Activated CD8-positive, alpha-beta T cell treated with anti-CD3 and anti-CD28 coated beads for 36 hours (primary cell): ENCODE measurements at regions of chr1 and their contacts with region 1.

Region 1: GRCh38 chr1:89125913-89126580 is at the start of gene GBP2:
- DNase-seq: peak; percentile 30
- ATAC-seq: peak; percentile 73
- H3K4me3 Mint-ChIP-seq: peak within 1 kb of the TSS; percentile 87
- H3K27ac Mint-ChIP-seq: peak within 1 kb of the TSS; percentile 99
- H3K4me1 Mint-ChIP-seq: peaks cover 48% of the 10 kb centered on the region
- H3K27me3 Mint-ChIP-seq: no peaks in the 10 kb centered on the region
- CTCF ChIP-seq: no peak
- total RNA-seq, gene GBP2: 181 to 189 TPM

Region 2: DNA sequence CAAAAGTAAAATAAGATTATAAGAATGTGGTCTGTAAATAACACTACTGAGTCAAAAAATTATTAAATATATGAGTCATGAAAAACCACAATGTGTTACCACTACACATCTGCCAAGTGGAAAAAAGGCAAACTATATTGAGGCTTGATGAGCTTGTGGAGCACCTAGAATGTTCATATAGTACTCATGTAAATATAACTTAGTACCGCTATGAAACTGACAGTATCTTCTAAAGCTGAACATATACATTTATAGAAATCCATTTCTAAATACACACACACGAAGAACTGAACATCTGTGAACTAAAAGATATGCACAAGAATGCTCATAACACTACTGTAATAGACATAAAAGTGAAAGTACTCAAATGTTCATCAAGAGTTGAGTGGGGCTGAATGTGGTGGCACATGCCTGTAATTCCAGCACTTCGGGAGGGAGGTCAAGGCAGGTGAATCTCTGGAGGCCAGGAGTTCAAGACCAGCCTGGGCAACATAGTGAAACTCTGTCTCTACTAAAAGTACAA is 84.9 kb before region 1 on chr1:
- CTCF ChIA-PET with region 1: no interaction called
- POLR2A ChIA-PET with region 1: interaction called, 11 read pairs
- intact Hi-C with region 1: no loop called
- DNase-seq: peak; percentile 43
- ATAC-seq: peak; percentile 88
- H3K4me3 Mint-ChIP-seq: peak overlapping the region; percentile 51
- H3K27ac Mint-ChIP-seq: peak overlapping the region; percentile 88
- H3K4me1 Mint-ChIP-seq: peaks cover 43% of the 10 kb centered on the region
- H3K27me3 Mint-ChIP-seq: peaks cover 2% of the 10 kb centered on the region
- CTCF ChIP-seq: no peak

Region 3: DNA sequence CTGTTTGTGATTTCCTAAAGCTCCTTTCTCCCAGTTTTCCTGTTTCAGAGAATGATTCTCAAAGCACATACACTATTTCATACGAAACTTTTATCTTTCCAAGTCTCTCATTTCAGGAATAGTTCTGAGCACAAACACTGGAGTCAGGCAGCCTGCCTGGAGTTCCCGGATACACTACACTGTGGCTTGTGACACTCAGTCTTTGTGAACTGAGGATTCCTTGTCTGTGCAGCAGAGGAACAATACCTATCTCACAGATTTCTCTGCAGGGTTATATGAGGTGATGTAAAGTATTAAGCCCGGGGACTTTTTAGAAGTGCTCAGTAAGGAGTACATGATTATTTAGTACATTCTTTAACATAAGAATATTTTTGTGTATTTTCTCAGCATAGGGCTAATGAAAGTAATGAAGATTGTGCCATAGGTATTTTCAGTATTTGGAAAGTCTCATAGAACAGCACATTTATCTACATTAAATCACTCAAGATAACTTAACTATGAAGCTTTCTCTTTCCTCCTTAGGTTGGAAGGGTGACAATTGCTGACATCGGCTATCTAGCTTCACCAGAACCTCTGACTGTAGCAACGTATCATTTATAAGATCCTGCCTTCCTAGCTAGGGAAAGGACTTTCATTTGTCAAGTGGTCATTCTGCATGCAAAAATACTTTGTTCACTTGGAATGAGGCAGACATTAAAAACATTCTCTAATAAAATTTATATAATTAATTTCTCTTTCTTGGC is 13.0 kb before region 1 on chr1:
- CTCF ChIA-PET with region 1: interaction called, 5 read pairs
- POLR2A ChIA-PET with region 1: interaction called, 29 read pairs
- intact Hi-C with region 1: no loop called
- DNase-seq: no peak
- ATAC-seq: no peak
- H3K4me3 Mint-ChIP-seq: no peak overlapping the region
- H3K27ac Mint-ChIP-seq: peak overlapping the region; percentile 4
- H3K4me1 Mint-ChIP-seq: peaks cover 46% of the 10 kb centered on the region
- H3K27me3 Mint-ChIP-seq: no peaks in the 10 kb centered on the region
- CTCF ChIP-seq: no peak

Region 4: DNA sequence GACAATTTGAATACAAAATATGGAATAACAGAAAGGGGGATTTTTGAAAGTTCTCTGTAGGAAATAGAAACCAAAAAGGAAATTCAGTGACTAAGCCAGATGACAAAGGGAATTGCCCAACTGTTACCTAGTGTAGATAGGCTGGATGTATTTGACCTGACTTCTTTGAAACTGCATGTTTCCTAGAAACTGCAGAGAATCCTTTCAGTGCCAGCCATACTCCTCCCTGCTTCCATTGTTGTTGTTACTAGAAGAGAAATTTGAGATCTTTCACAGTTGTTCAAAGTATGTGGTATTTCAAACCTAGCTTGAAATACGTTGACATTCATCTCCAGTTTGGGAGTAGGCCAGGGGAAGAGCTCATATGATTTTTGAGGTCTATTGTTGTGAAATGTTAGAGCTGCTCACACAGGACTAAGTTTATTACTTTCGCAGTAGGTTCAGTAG is 148.4 kb after region 1 on chr1:
- CTCF ChIA-PET with region 1: interaction called, 3 read pairs
- POLR2A ChIA-PET with region 1: interaction called, 18 read pairs
- intact Hi-C with region 1: loop called (anchors 2 kb)
- DNase-seq: peak; percentile 33
- ATAC-seq: peak; percentile 56
- H3K4me3 Mint-ChIP-seq: peak overlapping the region; percentile 100
- H3K27ac Mint-ChIP-seq: peak overlapping the region; percentile 100
- H3K4me1 Mint-ChIP-seq: peaks cover 56% of the 10 kb centered on the region
- H3K27me3 Mint-ChIP-seq: no peaks in the 10 kb centered on the region
- CTCF ChIP-seq: no peak

Region 5: DNA sequence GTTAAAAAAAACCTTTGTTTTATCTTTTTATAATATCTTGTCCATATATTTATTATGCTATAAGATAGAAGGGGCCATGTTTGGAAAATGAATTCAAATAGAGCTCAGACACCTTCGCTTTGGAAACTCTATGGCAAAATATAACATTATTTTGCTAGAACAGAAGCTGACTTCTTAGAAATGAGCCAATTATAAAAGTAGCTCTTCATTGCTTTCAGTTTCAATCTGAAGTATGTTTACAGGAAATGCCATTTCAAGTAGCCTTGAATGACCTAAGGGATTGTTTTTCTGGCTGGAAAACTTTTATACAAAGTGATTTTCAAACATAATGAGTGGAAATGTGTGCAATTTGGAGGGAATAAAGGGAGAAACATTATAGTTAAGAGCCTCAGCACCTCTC is 184.5 kb after region 1 on chr1:
- CTCF ChIA-PET with region 1: interaction called, 6 read pairs
- POLR2A ChIA-PET with region 1: interaction called, 11 read pairs
- intact Hi-C with region 1: no loop called
- DNase-seq: no peak
- ATAC-seq: peak; percentile 63
- H3K4me3 Mint-ChIP-seq: peak overlapping the region; percentile 18
- H3K27ac Mint-ChIP-seq: peak overlapping the region; percentile 94
- H3K4me1 Mint-ChIP-seq: peaks cover 58% of the 10 kb centered on the region
- H3K27me3 Mint-ChIP-seq: no peaks in the 10 kb centered on the region
- CTCF ChIP-seq: no peak